HEK293 (cell line): ENCODE measurements at regions of chr20 and their contacts with region 1.

Region 1: GRCh38 chr20:5788385-5788895 is 38.2 kb downstream of the SHLD1 start:
- H3K4me3 ChIP-seq: no peak overlapping the region
- H3K27ac ChIP-seq: no peak overlapping the region
- H3K4me1 ChIP-seq: peaks cover 13% of the 10 kb centered on the region
- CTCF ChIP-seq: peak; percentile 68; the same call in 1 of the 2 replicates

Region 2: DNA sequence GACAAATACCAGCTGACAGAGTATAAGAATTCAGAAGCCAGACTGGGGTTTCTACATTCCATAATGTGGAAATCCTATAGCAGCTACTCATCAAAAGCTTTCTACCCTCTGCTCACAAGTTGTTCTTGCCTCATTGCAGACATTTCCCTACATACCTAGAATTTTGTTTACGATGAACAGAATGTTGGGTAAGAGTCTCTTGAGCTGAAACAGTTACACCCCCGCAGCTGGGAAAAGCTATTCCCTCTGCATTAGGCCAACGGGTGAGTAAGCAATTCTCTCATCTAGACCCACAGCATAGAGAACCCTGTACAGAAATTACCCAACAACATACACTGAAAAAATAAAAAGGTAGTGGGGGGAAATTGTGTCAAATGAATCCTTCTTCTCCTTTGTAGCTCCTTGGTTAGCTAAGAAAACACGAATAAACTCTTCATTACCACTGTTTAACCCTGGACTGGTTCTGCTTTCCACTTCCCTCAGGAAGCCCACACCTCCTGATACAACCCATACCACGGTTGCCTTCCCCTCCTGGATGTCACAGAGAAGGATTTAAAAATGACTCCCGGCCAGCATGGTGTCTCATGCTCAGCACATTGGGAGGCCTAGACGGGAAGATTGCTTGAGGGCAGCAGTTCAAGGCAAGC is 253.2 kb before region 1 on chr20:
- CTCF ChIA-PET with region 1: interaction called, 103 read pairs
- POLR2A ChIA-PET with region 1: no interaction called
- H3K4me3 ChIP-seq: no peak overlapping the region
- H3K27ac ChIP-seq: no peak overlapping the region
- H3K4me1 ChIP-seq: no peaks in the 10 kb centered on the region
- CTCF ChIP-seq: no peak

Region 3: DNA sequence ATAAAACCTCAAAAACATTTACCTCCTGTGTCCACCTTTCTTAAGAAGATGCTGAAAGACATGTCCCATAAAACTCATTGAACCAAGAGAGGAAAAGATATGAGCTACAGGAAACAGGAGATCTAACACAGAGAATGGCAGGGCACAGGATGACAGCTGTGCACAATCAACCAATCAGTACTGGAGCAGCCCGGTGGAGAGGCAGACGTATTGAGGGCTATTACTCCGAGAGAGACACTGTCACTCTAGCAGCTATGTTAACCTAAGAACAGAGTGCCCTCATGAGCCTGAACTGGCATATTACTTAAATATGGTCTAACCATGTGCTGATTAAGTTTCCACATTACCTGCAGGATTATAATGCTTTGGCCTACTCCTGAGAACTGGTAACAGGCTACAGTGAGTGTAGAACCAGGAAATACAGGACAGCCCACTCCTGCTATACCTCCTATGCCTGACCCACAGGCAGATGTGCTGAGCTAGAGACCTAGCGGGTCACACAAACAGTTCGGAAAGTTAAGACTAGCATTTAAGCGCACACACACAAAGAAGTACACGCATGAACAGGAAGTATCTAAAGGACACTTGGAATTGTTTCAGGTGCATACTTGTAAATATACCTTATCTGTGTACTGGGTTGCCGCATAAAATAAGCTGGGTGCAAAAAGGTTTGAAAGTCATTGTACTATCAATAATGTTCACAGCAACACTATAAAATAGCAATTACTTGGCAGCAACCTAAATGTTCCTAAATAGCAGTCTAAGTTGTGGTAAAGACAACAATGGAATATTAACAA is 237.5 kb before region 1 on chr20:
- CTCF ChIA-PET with region 1: interaction called, 74 read pairs
- POLR2A ChIA-PET with region 1: no interaction called
- H3K4me3 ChIP-seq: no peak overlapping the region
- H3K27ac ChIP-seq: no peak overlapping the region
- H3K4me1 ChIP-seq: no peaks in the 10 kb centered on the region
- CTCF ChIP-seq: no peak

Region 4: DNA sequence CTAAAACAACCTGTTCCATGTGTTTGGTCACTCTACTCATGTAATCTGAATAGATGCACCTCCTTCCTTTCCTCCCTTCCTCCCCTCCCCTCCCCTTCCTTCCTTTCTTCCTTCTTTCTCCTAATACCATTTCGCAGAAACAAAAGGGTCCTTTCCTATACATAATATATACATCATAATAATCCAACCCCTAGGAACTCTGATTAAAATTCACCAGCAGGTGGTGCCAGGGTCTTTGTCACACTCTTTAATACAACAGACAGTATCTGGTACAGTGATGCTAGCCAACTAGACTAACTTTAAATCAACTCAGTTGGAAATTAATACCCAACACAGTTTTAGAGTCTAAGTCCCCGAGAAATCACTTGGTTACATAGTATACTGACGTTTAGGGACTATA is 219.4 kb before region 1 on chr20:
- CTCF ChIA-PET with region 1: interaction called, 81 read pairs
- POLR2A ChIA-PET with region 1: interaction called, 3 read pairs
- H3K4me3 ChIP-seq: no peak overlapping the region
- H3K27ac ChIP-seq: no peak overlapping the region
- H3K4me1 ChIP-seq: no peaks in the 10 kb centered on the region
- CTCF ChIP-seq: peak; percentile 29; the same call in 1 of the 2 replicates

Region 5: GRCh38 chr20:5776077-5776476 is 12.4 kb before region 1 on chr20:
- CTCF ChIA-PET with region 1: interaction called, 13 read pairs
- POLR2A ChIA-PET with region 1: no interaction called
- H3K4me3 ChIP-seq: no peak overlapping the region
- H3K27ac ChIP-seq: no peak overlapping the region
- H3K4me1 ChIP-seq: no peaks in the 10 kb centered on the region
- CTCF ChIP-seq: no peak

Region 6: DNA sequence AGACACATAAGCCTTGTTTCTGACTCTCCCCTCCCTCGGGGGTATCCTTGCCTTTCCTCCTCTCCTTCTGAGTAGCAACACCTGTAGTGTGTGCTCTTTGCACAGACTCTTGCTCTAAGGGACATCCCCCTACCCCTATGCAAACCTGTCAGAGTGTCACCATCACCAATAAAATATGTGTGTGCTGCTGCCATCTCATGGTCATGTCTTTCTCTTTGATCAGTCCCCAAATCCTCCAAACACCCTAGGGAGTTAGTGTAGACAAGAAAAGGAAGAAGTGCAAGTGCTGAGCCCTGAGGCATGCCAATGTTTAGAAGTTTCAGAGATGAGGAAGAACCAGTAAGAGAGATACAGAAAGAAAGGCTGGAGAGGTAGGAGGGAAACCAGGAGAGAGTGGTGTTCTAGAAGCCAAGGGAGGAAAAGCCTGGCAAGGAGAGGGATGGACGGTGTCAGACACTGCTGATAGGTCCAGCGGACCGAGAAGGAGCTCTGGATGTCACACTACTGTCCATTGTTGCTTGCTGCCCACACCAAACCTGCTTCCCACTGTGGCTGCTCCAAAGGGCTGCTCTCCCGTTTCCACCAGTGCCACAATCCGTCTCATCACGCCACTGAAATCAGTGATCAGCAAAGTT is 145.5 kb after region 1 on chr20:
- CTCF ChIA-PET with region 1: interaction called, 13 read pairs
- POLR2A ChIA-PET with region 1: no interaction called
- H3K4me3 ChIP-seq: no peak overlapping the region
- H3K27ac ChIP-seq: no peak overlapping the region
- H3K4me1 ChIP-seq: no peaks in the 10 kb centered on the region
- CTCF ChIP-seq: 0 out of 2 replicates have a peak, but pooled peaks have one; percentile 13